ENCODE measurements at regions of chr19 and their contacts with region 1.

Region 1: DNA sequence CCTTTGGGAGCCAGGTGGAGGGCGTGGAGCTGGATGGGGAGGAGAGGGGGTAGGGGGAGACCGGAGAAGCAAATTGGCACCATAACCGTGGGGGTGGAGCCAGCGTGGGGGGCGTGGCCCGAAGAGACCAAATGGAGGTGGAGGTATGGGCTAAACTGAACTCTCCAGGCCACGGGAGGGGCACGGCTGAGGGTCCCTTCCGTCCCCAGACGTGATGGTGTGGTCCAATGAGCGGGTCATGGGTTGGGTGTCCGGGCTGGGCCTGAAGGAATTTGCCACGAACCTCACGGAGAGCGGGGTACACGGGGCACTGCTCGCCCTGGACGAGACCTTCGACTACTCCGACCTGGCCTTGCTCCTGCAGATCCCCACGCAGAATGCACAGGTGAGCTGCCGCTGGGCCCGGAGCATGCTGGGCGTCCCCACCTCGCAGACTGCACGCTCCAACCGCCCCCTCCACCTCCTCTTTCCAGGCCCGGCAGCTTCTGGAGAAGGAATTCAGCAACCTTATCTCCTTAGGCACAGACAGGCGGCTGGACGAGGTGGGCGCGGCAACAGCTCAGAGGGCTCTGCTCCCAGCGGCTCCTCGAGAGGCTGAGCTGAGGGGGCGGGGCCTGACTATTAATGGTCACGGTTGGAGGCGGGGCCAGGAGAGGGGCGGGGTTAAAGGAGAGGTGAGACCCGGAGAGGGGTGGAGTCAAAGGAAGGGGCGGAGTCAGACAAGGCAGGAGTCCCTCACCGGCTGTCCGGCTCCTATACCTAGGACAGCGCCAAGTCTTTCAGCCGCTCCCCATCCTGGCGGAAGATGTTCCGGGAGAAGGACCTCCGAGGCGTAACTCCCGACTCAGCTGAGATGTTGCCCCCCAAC is 6.2 kb downstream of the HRC start:
- DNase-seq: peak; percentile 98 to 99
- ATAC-seq: peak; percentile 87
- H3K4me3 ChIP-seq: peak overlapping the region; percentile 14 to 64
- H3K27ac ChIP-seq: peak overlapping the region in 1 of 2 donors; percentile 17
- H3K4me1 ChIP-seq: no peaks in the 10 kb centered on the region
- H3K27me3 ChIP-seq: no peaks in the 10 kb centered on the region

Region 2: GRCh38 chr19:48993175-48994034 is 155.6 kb before region 1 on chr19 and contains the starts of genes GYS1 and RUVBL2:
- intact Hi-C with region 1: loop called in 1 of 2 experiments (anchors 10 kb)
- DNase-seq: peak; percentile 100
- ATAC-seq: peak; percentile 97
- H3K4me3 ChIP-seq: peak within 1 kb of the TSS; percentile 60 to 97
- H3K27ac ChIP-seq: peak within 1 kb of the TSS; percentile 31 to 100
- H3K4me1 ChIP-seq: no peaks in the 10 kb centered on the region
- H3K27me3 ChIP-seq: no peaks in the 10 kb centered on the region
- total RNA-seq, gene GYS1: 47.5 to 61.9 TPM
- total RNA-seq, gene RUVBL2: 28.9 to 42.1 TPM

Region 3: GRCh38 chr19:49097455-49098288 is 51.3 kb before region 1 on chr19:
- intact Hi-C with region 1: loop called in 1 of 2 experiments (anchors 10 kb)
- DNase-seq: peak in 1 of 2 donors; percentile 74
- ATAC-seq: peak; percentile 84
- H3K4me3 ChIP-seq: no peak overlapping the region
- H3K27ac ChIP-seq: no peak overlapping the region
- H3K4me1 ChIP-seq: no peaks in the 10 kb centered on the region
- H3K27me3 ChIP-seq: no peaks in the 10 kb centered on the region

Region 4: DNA sequence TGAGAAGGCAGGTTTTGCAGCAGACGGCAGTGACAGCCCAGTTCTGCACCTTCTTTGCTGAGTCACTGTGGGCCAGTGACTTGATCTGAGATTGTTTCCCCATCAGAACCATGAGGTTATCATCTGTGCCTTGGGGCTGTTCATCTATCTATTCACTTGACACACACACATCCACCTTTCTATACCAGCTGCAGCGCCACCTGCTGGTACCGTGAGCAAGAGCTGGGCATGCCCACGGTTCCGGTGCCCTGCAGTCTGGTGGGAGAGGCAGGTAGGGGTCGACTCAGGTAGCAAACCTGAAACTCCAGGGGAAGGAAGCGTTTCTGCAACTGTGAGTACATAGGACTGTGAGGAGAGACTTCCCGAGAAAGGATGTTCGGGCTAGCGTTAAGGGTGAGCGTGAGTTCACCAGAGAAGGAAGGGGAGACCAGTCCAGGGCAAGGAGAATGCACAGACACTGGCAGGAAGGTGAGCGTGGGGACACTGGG is 42.3 kb before region 1 on chr19:
- intact Hi-C with region 1: loop called in 1 of 2 experiments (anchors 5 kb)
- DNase-seq: no peak
- ATAC-seq: no peak
- H3K4me3 ChIP-seq: no peak overlapping the region
- H3K27ac ChIP-seq: no peak overlapping the region
- H3K4me1 ChIP-seq: no peaks in the 10 kb centered on the region
- H3K27me3 ChIP-seq: no peaks in the 10 kb centered on the region

Region 5: DNA sequence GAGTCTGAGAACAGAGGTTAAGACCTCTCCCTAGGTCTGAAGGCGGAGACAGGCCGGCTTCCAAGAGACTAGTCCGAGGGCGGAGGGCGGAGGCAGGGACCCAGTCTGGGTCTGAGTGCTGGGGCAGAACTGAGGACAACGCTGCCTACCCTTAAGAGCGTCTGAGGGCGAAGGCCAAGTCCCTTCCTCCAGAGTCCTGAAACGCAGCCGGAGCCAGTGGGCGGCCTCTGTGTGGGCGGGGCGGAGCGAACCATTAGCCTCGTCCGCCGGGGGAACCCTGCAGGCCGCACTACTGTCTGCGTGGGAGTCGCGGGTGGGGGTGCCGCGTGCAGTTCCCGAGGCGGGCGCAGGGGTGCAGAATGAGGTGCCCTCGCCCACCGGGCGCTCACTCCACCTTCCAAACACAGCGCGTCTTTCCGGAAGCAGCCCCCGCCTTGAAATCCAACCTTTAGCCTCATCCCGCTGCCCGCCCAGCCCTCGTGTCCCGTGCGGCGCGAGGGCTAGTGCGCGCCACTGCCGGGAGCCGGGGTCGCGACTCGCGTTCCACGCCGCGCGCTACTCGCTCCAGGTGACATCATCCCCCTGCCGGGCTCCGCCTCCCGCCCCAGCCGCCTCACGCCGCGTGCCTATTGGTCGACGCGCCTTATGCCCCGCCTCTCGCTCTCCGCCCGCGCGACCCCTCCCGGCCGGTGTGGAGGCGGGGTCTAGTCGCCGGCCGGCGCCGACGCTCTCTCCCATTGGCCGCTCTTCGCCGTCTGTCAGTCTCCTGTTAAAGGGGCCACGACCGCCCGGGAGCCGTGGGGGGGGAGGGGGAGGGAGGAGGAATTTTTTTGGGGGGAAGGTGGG is 30.2 kb before region 1 on chr19 and contains the start of gene C19orf73:
- intact Hi-C with region 1: loop called (anchors 2 to 5 kb)
- DNase-seq: peak; percentile 97 to 98
- ATAC-seq: peak; percentile 94
- H3K4me3 ChIP-seq: peak within 1 kb of the TSS; percentile 34 to 45
- H3K27ac ChIP-seq: peak within 1 kb of the TSS; percentile 23 to 91
- H3K4me1 ChIP-seq: peaks cover 0 to under 1% of the 10 kb centered on the region in 2 donors
- H3K27me3 ChIP-seq: no peaks in the 10 kb centered on the region
- total RNA-seq, gene C19orf73: 0.49 to 0.72 TPM

Region 6: GRCh38 chr19:49243129-49243528 is 94.1 kb after region 1 on chr19:
- intact Hi-C with region 1: no loop called
- DNase-seq: no peak
- ATAC-seq: no peak
- H3K4me3 ChIP-seq: no peak overlapping the region
- H3K27ac ChIP-seq: no peak overlapping the region
- H3K4me1 ChIP-seq: no peaks in the 10 kb centered on the region
- H3K27me3 ChIP-seq: no peaks in the 10 kb centered on the region

Region 7: GRCh38 chr19:49287141-49287770 is 138.2 kb after region 1 on chr19:
- intact Hi-C with region 1: no loop called
- DNase-seq: no peak
- ATAC-seq: no peak
- H3K4me3 ChIP-seq: no peak overlapping the region
- H3K27ac ChIP-seq: no peak overlapping the region
- H3K4me1 ChIP-seq: no peaks in the 10 kb centered on the region
- H3K27me3 ChIP-seq: no peaks in the 10 kb centered on the region

Region 8: DNA sequence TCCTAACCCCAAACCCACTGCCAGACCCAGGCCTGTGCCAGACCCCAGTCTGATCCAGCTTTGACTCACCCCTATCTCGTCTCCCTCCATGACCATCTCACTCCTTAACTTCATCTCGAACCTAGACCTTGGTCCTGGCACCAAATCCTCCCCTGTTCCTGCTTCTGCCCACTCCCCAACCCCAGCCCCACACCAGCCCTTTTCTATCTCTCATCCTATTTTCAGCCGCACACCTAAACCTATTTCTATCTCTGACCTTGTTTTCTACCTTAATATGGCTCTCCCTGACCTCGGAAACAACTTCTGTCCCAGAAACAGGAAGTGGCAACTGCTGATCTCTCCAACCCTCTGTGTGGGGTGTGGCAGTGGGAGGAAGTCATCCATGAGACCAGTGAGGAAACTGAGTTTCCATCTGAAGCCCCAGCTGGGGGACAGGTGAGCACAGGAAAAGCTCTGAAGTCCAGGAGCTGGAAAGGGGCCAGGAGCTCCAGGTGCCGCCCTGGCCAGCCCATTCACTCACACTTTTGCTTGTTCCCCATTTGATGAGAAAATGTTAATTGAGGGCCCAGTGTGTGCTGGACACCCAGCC is 260.5 kb after region 1 on chr19:
- intact Hi-C with region 1: no loop called
- DNase-seq: no peak
- ATAC-seq: no peak
- H3K4me3 ChIP-seq: no peak overlapping the region
- H3K27ac ChIP-seq: no peak overlapping the region
- H3K4me1 ChIP-seq: no peaks in the 10 kb centered on the region
- H3K27me3 ChIP-seq: no peaks in the 10 kb centered on the region